CD8-positive, alpha-beta T cell (primary cell): ENCODE measurements at regions of chr14 and their contacts with region 1.

Region 1: DNA sequence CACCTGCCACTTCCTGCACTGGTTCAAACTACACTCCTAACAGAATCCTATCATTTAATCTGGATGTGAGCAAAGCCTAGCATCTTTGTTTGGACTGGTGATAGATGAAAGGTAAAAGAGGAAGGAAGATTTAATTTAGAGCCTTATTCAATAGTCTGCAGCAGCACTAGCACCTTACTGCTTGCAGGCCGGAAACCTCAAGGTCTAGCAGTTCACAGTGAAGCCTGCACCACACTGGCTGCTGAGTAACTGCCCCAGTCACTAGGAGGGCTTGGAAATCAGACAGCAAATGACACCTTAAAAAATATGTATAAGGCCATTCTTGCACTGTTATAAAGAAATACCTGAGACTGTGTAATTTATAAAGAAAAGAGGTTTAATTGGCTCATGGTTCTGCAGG is 358.0 kb downstream of the DAD1 start:
- DNase-seq: peak in 6 of 9 experiments; percentile 5 to 60 (median 30)
- ATAC-seq: peak; percentile 68
- H3K4me3 ChIP-seq: no peak overlapping the region
- H3K4me3 Mint-ChIP-seq: peak overlapping the region; percentile 29
- H3K27ac ChIP-seq: no peak overlapping the region
- H3K27ac Mint-ChIP-seq: peak overlapping the region; percentile 81
- H3K4me1 ChIP-seq: no peaks in the 10 kb centered on the region
- H3K4me1 Mint-ChIP-seq: peaks cover 16% of the 10 kb centered on the region
- H3K27me3 ChIP-seq: no peaks in the 10 kb centered on the region
- H3K27me3 Mint-ChIP-seq: no peaks in the 10 kb centered on the region
- CTCF ChIP-seq: no peak

Region 2: GRCh38 chr14:22265319-22266137 is 34.5 kb after region 1 on chr14:
- CTCF ChIA-PET with region 1: no interaction called
- POLR2A ChIA-PET with region 1: no interaction called
- intact Hi-C with region 1: loop called (anchors 5 kb)
- DNase-seq: peak in 2 of 9 experiments; percentile 16 to 48
- ATAC-seq: no peak
- H3K4me3 ChIP-seq: no peak overlapping the region
- H3K4me3 Mint-ChIP-seq: peak overlapping the region; percentile 60
- H3K27ac ChIP-seq: peak overlapping the region in 1 of 2 experiments; percentile 46
- H3K27ac Mint-ChIP-seq: peak overlapping the region; percentile 84
- H3K4me1 ChIP-seq: no peaks in the 10 kb centered on the region
- H3K4me1 Mint-ChIP-seq: peaks cover 11% of the 10 kb centered on the region
- H3K27me3 ChIP-seq: no peaks in the 10 kb centered on the region
- H3K27me3 Mint-ChIP-seq: no peaks in the 10 kb centered on the region
- CTCF ChIP-seq: no peak